RWPE1 (cell line): ENCODE measurements at regions of chr13 and their contacts with region 1.

Region 1: GRCh38 chr13:108508263-108508662 is 121.1 kb upstream of the MYO16 start:
- DNase-seq: peak; percentile 18
- H3K27ac ChIP-seq: no peak overlapping the region
- CTCF ChIP-seq: peak; percentile 26

Region 2: DNA sequence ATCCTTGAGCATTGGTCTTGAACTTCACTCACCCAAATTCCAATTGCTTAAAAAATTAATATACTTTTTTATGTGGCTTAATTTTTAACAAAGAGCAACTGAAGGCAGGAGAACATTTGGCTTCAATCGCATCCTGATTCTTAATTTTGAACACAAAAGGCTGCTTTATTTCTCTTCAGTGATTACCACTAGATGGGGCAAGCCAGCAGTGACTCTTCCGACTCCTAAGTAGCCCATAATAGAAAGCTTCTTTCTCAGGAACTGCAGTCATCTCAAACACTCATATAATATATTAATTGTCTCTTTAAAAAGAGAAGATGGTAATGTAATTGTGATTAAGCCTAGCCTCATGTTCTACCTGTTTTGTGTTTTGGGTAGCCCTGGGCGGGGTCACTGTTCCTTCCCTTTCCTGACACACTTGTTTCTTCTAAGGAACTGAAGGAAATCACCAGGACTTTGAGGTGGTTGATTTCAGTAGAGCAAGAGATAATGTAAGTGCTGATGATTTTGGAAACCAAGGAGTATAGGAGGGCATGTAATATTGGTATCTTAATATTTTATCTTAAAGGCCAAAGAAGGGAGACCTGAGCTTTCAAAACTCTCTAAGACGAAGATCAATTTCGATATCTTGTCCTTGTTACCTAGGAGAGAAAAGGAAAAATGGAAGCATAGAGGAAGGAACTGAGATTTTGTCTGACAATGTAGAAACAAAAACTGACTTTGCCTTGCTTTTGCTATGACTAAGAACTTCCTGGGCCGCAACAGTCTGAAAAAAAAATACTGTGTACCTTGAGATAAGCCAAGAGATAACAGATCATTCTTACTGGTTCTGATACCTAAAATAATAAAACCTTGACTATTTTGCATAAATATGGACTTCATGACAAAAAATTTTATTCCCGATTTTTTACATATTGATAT is 165.6 kb before region 1 on chr13:
- CTCF ChIA-PET with region 1: interaction called, 15 read pairs
- POLR2A ChIA-PET with region 1: no interaction called
- DNase-seq: peak; percentile 16
- H3K27ac ChIP-seq: no peak overlapping the region
- CTCF ChIP-seq: peak; percentile 53